Activated CD4-positive, alpha-beta T cell treated with anti-CD3 and anti-CD28 coated beads, Interleukin-2, amount 10 ng/mL, durations not matched to agents 24 days and 14 days (primary cell): ENCODE measurements at regions of chr1 and their contacts with region 1.

Region 1: GRCh38 chr1:27154991-27155781 is at the start of gene SLC9A1:
- DNase-seq: peak; percentile 97
- H3K4me3 Mint-ChIP-seq: peak within 1 kb of the TSS; percentile 86
- H3K27ac Mint-ChIP-seq: peak within 1 kb of the TSS; percentile 98
- H3K4me1 Mint-ChIP-seq: peaks cover 43% of the 10 kb centered on the region
- H3K27me3 Mint-ChIP-seq: no peaks in the 10 kb centered on the region
- total RNA-seq, gene SLC9A1: 25.5 and 27.1 TPM in 2 replicates

Region 2: DNA sequence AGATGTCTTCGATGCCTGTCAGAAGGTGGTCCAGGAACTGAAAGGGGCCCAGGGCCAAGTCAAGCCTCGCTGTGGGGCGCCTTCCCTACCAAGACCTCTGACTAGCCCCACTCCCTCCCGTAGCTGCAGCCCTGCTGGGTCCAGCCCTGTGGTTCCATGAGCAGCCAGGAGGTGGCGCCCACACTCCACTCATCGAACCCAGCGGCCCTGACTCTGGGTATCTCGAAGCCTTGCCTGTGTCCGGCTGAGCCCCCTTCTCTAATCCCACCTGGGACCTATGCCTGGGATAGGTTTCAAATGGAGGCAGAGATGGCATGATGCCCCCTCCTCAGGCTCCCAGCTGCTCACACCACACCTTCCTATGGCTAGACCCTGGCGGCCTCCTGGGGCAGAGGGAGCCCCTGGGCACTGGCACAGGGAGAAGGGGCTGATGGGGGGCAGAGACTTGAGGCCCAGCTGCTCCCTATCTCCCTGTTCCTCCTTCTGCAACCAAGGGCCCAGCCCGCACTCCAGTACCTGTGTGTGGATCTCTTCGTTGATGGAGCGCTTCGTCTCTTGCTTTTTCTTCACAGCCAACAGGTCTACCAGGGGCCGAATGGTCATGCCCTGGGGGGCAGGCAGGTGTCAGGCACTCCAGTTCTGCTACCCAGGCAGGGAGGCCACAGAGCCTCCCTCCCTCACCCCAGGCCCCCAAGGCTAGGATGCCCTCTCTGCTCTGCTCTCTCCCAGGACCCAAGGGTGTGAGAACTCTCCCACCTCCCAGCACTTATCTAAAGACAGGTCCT is 52.3 kb before region 1 on chr1:
- intact Hi-C with region 1: loop called (anchors 2 kb)
- DNase-seq: peak; percentile 95
- H3K4me3 Mint-ChIP-seq: no peak overlapping the region
- H3K27ac Mint-ChIP-seq: peak overlapping the region; percentile 66
- H3K4me1 Mint-ChIP-seq: peaks cover 21% of the 10 kb centered on the region
- H3K27me3 Mint-ChIP-seq: no peaks in the 10 kb centered on the region

Region 3: GRCh38 chr1:27111626-27112573 is 43.3 kb before region 1 on chr1:
- intact Hi-C with region 1: loop called (anchors 1 kb)
- DNase-seq: peak; percentile 90
- H3K4me3 Mint-ChIP-seq: peak overlapping the region; percentile 59
- H3K27ac Mint-ChIP-seq: peak overlapping the region; percentile 87
- H3K4me1 Mint-ChIP-seq: peaks cover 38% of the 10 kb centered on the region
- H3K27me3 Mint-ChIP-seq: no peaks in the 10 kb centered on the region

Region 4: GRCh38 chr1:27136998-27137542 is 18.1 kb before region 1 on chr1:
- intact Hi-C with region 1: loop called (anchors 1 kb)
- DNase-seq: peak; percentile 93
- H3K4me3 Mint-ChIP-seq: peak overlapping the region; percentile 82
- H3K27ac Mint-ChIP-seq: peak overlapping the region; percentile 100
- H3K4me1 Mint-ChIP-seq: peaks cover 49% of the 10 kb centered on the region
- H3K27me3 Mint-ChIP-seq: no peaks in the 10 kb centered on the region

Region 5: GRCh38 chr1:27234049-27234882 is 79.1 kb after region 1 on chr1 and contains the start of gene WDTC1:
- intact Hi-C with region 1: loop called (anchors 1 kb)
- DNase-seq: peak; percentile 99
- H3K4me3 Mint-ChIP-seq: peak within 1 kb of the TSS; percentile 98
- H3K27ac Mint-ChIP-seq: peak within 1 kb of the TSS; percentile 95
- H3K4me1 Mint-ChIP-seq: peaks cover 23% of the 10 kb centered on the region
- H3K27me3 Mint-ChIP-seq: no peaks in the 10 kb centered on the region
- total RNA-seq, gene WDTC1: 17.4 and 18.2 TPM in 2 replicates